Prostate gland (tissue), 2 donors: ENCODE measurements at regions of chr12 and their contacts with region 1.

Region 1: DNA sequence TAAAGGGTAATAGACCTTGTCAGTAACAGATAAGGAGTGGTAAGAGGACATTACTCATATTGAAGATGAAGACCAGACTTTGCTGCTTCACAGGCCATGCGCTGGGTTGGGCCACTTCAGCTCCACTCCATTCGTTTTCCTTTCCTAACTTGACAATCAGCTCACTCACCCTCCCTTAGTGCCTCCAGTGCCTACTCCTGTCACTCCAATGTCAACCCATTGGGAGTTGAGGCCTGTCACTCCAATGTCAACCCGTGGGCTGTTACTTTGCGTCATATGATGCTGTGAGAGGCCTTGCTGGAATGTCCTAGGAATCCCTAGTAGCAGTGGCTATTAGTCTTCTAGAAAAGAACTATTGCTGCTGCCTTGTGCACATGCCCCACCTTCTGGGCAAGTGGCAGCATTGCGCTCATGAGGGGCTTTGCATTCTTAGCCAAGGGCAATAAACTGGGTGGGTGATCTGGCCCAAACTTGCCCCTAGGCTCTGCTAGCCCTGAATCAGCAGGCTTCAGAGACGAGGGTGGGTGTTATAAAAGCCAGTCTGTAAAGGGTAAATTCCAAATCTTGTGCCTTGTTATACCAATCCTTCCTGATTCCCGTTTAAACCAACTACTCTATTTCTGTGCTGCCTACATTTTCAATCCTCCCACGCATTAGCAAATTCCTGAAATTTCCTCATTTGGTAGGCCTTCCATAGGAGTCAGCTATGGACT is 36.1 kb downstream of the BAZ2A start:
- DNase-seq: peak; percentile 16
- H3K4me3 ChIP-seq: no peak overlapping the region
- H3K27ac ChIP-seq: no peak overlapping the region
- H3K4me1 ChIP-seq: no peaks in the 10 kb centered on the region
- H3K27me3 ChIP-seq: no peaks in the 10 kb centered on the region
- CTCF ChIP-seq: peak in 3 of 4 experiments; percentile 37 to 72 (median 61)
- POLR2A ChIP-seq: no peak

Region 2: GRCh38 chr12:56630160-56630632 is 36.1 kb after region 1 on chr12 and contains the start of gene BAZ2A:
- intact Hi-C with region 1: loop called (anchors 5 kb)
- DNase-seq: peak; percentile 92
- H3K4me3 ChIP-seq: peak within 1 kb of the TSS; percentile 99
- H3K27ac ChIP-seq: peak within 1 kb of the TSS; percentile 98
- H3K4me1 ChIP-seq: peaks cover 21% of the 10 kb centered on the region
- H3K27me3 ChIP-seq: no peaks in the 10 kb centered on the region
- CTCF ChIP-seq: no peak
- POLR2A ChIP-seq: peak; percentile 41
- total RNA-seq, gene BAZ2A: 48.7 to 143 TPM

Region 3: GRCh38 chr12:56839915-56840325 is 245.9 kb after region 1 on chr12:
- intact Hi-C with region 1: no loop called
- DNase-seq: peak; percentile 24
- H3K4me3 ChIP-seq: no peak overlapping the region
- H3K27ac ChIP-seq: no peak overlapping the region
- H3K4me1 ChIP-seq: no peaks in the 10 kb centered on the region
- H3K27me3 ChIP-seq: no peaks in the 10 kb centered on the region
- CTCF ChIP-seq: peak in 2 of 4 experiments; percentile 33 to 51
- POLR2A ChIP-seq: no peak